WTC11 (cell line): ENCODE measurements at regions of chr17 and their contacts with region 1.

Region 1: DNA sequence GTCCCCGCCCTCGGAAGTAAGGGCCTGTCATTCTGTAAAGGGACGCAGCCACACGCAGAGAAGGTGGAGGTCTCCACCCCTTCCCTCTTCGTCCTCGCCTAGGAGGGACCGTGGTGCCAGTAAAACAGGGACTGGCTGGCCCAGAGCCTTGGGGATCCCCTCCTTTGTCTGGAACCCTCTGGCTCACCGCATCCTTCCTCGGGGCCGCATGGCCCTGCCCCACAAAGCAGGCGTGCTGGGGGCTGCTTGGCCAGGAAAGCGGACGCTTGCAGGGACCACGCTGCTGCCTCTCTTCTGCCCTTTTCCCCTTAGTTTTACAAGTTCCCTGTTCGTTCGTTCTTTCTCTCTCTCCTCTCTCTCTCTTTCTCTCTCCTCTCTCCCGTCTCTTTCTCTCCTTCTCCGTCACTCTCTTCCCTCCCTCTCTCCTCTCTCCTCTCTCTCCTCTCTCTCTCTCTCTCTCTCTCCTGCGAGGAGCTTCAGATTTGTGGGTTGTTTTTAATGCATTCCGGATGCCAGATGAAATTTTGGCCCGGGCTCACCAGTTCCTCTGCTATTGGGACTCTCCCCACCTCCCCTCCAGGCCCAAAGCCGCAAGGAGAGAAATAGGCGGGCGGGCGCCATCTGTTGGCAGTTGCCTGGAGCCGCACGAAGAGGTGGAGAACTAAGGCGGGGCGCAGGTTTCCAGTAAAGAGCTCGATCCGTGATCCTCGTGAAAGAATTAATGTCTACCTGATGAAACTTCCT is 35.1 kb upstream of the CDRT4 start:
- DNase-seq: peak; percentile 94
- ATAC-seq: peak; percentile 94
- H3K4me3 Mint-ChIP-seq: peak overlapping the region; percentile 63
- H3K27ac Mint-ChIP-seq: peak overlapping the region; percentile 58; the same call in 1 of the 2 replicates
- H3K4me1 Mint-ChIP-seq: peaks cover 20% of the 10 kb centered on the region
- H3K27me3 Mint-ChIP-seq: no peaks in the 10 kb centered on the region
- CTCF ChIP-seq: peak; percentile 72; the same call in 1 of the 2 replicates

Region 2: GRCh38 chr17:15233022-15233805 is 269.3 kb before region 1 on chr17:
- CTCF ChIA-PET with region 1: interaction called, 18 read pairs
- POLR2A ChIA-PET with region 1: no interaction called
- DNase-seq: peak; percentile 27
- ATAC-seq: peak; percentile 82
- H3K4me3 Mint-ChIP-seq: no peak overlapping the region
- H3K27ac Mint-ChIP-seq: no peak overlapping the region
- H3K4me1 Mint-ChIP-seq: peaks cover 5% of the 10 kb centered on the region
- H3K27me3 Mint-ChIP-seq: no peaks in the 10 kb centered on the region
- CTCF ChIP-seq: no peak

Region 3: GRCh38 chr17:15257258-15257788 is 245.2 kb before region 1 on chr17:
- CTCF ChIA-PET with region 1: interaction called, 148 read pairs
- POLR2A ChIA-PET with region 1: no interaction called
- DNase-seq: peak; percentile 78
- ATAC-seq: peak; percentile 15
- H3K4me3 Mint-ChIP-seq: peak overlapping the region; percentile 24; the same call in 1 of the 2 replicates
- H3K27ac Mint-ChIP-seq: no peak overlapping the region
- H3K4me1 Mint-ChIP-seq: peaks cover 24% of the 10 kb centered on the region
- H3K27me3 Mint-ChIP-seq: peaks cover 64% of the 10 kb centered on the region
- CTCF ChIP-seq: peak; percentile 79

Region 4: DNA sequence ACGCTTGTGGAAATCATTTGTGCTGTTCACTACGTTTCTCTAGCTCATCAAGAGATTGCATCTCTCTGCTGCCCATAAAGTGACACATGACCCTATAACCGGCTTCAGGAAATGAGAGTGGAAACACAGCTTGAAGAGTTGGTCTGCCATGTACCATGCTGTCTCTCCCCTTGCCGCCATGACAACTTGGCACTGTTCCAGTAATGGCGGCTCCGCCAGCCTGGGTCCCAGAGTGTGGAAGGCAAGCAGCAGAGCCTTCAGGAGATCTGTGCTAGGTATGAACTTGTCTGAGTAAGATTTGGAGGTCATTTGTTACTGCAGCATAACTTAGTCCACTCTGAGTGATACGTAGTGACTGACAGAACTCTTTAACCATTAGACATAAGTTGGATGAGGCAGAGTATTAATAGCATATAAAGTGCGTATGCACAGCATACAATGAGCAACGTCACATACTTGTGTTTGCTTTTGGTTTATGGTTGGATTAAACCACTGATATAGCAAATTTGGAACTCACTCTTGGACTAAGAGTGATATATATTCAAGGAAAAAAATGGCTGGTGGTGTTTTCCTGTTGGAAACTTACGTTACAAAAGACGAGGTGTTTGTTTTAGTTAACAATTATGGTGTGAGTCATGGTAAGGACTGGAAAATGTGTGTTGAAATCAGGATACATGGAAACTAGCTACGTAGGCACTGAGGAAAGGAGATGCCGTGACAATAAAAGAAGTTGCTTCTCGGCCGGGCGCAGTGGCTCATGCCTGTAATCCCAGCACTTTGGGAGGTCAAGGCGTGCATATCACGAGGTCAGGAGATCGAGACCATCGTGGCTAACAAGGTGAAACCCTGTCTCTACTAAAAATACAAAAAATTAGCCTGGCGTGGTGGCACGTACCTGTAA is 213.0 kb before region 1 on chr17:
- CTCF ChIA-PET with region 1: no interaction called
- POLR2A ChIA-PET with region 1: no interaction called
- DNase-seq: no peak
- ATAC-seq: no peak
- H3K4me3 Mint-ChIP-seq: no peak overlapping the region
- H3K27ac Mint-ChIP-seq: no peak overlapping the region
- H3K4me1 Mint-ChIP-seq: peaks cover 10% of the 10 kb centered on the region
- H3K27me3 Mint-ChIP-seq: no peaks in the 10 kb centered on the region
- CTCF ChIP-seq: no peak

Region 5: DNA sequence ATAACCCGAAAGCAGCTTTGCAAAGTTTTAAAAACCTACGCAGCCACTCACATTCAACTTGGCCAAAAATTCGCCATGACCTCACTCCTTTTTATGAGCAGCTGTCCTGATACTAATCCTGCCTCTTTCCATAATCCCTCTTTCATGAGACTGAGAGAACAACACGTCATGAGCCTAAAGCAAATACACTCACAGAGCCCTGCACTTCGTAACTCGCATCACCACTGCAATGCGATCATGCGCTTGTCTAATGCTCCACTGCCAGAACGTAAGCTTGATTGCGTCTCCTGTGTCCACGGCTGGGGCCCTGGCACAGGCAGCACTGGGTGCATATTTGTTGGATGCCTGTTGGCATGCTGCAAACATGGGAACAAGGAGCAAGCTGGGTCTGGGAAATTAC is 71.3 kb before region 1 on chr17:
- CTCF ChIA-PET with region 1: interaction called, 29 read pairs
- POLR2A ChIA-PET with region 1: no interaction called
- DNase-seq: no peak
- ATAC-seq: no peak
- H3K4me3 Mint-ChIP-seq: no peak overlapping the region
- H3K27ac Mint-ChIP-seq: no peak overlapping the region
- H3K4me1 Mint-ChIP-seq: peaks cover 6% of the 10 kb centered on the region; the same call in 1 of the 2 replicates
- H3K27me3 Mint-ChIP-seq: peaks cover 3% of the 10 kb centered on the region; the same call in 1 of the 2 replicates
- CTCF ChIP-seq: no peak

Region 6: GRCh38 chr17:15469260-15469659 is 33.3 kb before region 1 on chr17:
- CTCF ChIA-PET with region 1: interaction called, 12 read pairs
- POLR2A ChIA-PET with region 1: no interaction called
- DNase-seq: no peak
- ATAC-seq: no peak
- H3K4me3 Mint-ChIP-seq: no peak overlapping the region
- H3K27ac Mint-ChIP-seq: no peak overlapping the region
- H3K4me1 Mint-ChIP-seq: peaks cover 10% of the 10 kb centered on the region
- H3K27me3 Mint-ChIP-seq: no peaks in the 10 kb centered on the region
- CTCF ChIP-seq: no peak

Region 7: DNA sequence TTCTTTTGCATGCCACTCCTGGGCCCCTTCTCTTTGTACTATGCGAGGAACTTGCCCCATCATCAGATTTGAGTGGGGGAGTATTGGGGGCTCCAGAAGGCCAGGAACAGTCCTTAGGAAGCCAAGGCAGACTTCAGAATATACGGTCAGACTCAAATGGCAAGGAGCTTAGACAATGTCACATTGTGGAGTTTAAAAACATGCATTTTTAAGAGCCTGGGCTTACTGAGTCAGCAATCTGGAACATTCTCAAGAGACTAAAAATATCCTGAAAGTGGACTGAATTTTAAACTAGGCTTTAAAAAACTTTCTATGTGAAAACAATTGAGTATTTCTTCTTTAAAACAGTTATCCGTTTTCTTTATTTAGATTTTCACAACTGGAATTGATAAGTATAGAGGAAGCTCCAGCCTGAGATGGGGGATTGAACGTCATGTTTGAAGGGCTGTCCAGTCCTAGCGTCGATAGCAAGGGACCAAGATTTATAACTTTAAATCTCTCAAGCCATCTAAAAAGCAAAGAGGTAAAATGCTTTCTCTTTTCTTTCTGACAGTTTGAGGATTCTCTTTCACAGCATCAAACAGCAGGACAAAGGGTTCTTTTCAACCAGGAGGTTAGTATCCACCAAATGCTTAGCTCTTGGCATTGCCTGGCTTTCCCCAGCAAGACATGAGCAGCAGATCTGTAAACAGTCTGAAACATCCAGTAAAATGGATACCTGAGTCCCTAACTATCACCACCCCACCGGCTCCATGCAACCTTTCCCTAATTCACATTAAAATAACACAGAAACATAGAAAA is 10.7 kb after region 1 on chr17:
- CTCF ChIA-PET with region 1: interaction called, 12 read pairs
- POLR2A ChIA-PET with region 1: no interaction called
- DNase-seq: no peak
- ATAC-seq: no peak
- H3K4me3 Mint-ChIP-seq: no peak overlapping the region
- H3K27ac Mint-ChIP-seq: no peak overlapping the region
- H3K4me1 Mint-ChIP-seq: no peaks in the 10 kb centered on the region
- H3K27me3 Mint-ChIP-seq: no peaks in the 10 kb centered on the region
- CTCF ChIP-seq: no peak